ENCODE measurements at regions of chr1 and their contacts with region 1.

Region 1: GRCh38 chr1:86499987-86500593 is 31.4 kb downstream of the CLCA1 start:
- DNase-seq: peak in 6 of 9 donors; percentile 55 to 76 (median 73)
- ATAC-seq: peak; percentile 92
- H3K4me3 ChIP-seq: no peak overlapping the region
- H3K4me3 Mint-ChIP-seq: no peak overlapping the region
- H3K27ac ChIP-seq: no peak overlapping the region
- H3K27ac Mint-ChIP-seq: no peak overlapping the region
- H3K4me1 ChIP-seq: peaks cover 0 to 8% of the 10 kb centered on the region in 2 donors
- H3K4me1 Mint-ChIP-seq: peaks cover 0 to 18% (median 10%) of the 10 kb centered on the region in 7 donors
- H3K27me3 ChIP-seq: no peaks in the 10 kb centered on the region
- H3K27me3 Mint-ChIP-seq: peaks cover 6 to 46% (median 14%) of the 10 kb centered on the region in 5 donors

Region 2: DNA sequence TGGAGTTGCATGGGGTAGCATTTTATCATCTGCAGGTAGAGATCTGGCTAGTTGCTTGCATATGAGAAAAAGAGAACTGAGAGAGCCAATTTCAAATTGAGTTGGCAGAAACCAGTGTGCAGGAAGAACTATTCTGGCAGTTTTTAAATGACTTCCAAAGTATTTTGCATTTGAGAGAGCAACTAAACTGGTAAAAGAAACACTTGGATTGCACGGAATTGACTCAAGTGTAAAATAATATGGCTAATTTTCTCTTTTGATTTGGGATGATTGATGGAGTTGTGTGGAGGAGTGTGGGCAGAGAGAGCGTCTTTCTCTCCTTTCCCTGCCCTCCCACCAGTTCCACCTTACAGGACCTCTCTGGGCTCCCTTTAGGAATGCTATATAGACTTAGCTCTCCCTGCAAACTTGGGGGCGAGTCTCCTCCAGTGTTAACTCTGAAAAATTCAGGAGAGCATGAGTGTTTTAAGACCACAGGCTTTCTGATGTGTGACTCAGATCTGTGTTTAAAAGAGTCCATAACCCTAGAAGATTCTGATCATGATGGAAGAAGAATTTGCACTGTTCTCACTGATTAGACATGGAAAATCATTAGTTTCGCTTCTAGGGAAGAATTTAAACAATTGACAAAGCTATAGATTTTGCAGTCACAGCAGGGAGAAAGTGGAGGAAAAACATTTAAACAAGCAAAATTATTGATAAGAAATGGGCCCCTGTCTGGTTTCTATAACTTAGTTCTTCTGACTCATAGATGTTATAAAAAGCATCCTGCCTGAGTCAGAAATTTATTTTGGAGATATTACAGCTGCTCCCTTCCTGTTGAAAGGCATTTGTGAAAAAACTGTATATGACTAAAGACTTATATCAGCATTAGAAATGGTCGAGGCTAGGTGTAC is 1901.0 kb before region 1 on chr1:
- CTCF ChIA-PET with region 1: no interaction called
- POLR2A ChIA-PET with region 1: no interaction called
- intact Hi-C with region 1: no loop called
- DNase-seq: no peak
- ATAC-seq: no peak
- H3K4me3 ChIP-seq: no peak overlapping the region
- H3K4me3 Mint-ChIP-seq: peak overlapping the region in 1 of 10 donors; percentile 2
- H3K27ac ChIP-seq: no peak overlapping the region
- H3K27ac Mint-ChIP-seq: peak overlapping the region in 2 of 9 donors; percentile 10 to 60
- H3K4me1 ChIP-seq: no peaks in the 10 kb centered on the region
- H3K4me1 Mint-ChIP-seq: peaks cover 0 to 11% (median 1%) of the 10 kb centered on the region in 7 donors
- H3K27me3 ChIP-seq: no peaks in the 10 kb centered on the region
- H3K27me3 Mint-ChIP-seq: no peaks in the 10 kb centered on the region

Region 3: GRCh38 chr1:85707990-85708828 is 791.9 kb before region 1 on chr1 and contains the start of gene ZNHIT6:
- CTCF ChIA-PET with region 1: no interaction called
- POLR2A ChIA-PET with region 1: no interaction called
- intact Hi-C with region 1: loop called in 1 of 2 experiments (anchors 5 kb)
- DNase-seq: peak; percentile 62 to 94 (median 89)
- ATAC-seq: peak; percentile 99
- H3K4me3 ChIP-seq: peak within 1 kb of the TSS; percentile 90
- H3K4me3 Mint-ChIP-seq: no peak within 1 kb of the TSS
- H3K27ac ChIP-seq: peak within 1 kb of the TSS; percentile 77
- H3K27ac Mint-ChIP-seq: no peak within 1 kb of the TSS
- H3K4me1 ChIP-seq: peaks cover 14 to 21% of the 10 kb centered on the region in 2 donors
- H3K4me1 Mint-ChIP-seq: peaks cover 11 to 33% (median 18%) of the 10 kb centered on the region in 7 donors
- H3K27me3 ChIP-seq: no peaks in the 10 kb centered on the region
- H3K27me3 Mint-ChIP-seq: no peaks in the 10 kb centered on the region
- total RNA-seq, gene ZNHIT6: 13.8 to 22.2 (median 20.2) TPM

Region 4: DNA sequence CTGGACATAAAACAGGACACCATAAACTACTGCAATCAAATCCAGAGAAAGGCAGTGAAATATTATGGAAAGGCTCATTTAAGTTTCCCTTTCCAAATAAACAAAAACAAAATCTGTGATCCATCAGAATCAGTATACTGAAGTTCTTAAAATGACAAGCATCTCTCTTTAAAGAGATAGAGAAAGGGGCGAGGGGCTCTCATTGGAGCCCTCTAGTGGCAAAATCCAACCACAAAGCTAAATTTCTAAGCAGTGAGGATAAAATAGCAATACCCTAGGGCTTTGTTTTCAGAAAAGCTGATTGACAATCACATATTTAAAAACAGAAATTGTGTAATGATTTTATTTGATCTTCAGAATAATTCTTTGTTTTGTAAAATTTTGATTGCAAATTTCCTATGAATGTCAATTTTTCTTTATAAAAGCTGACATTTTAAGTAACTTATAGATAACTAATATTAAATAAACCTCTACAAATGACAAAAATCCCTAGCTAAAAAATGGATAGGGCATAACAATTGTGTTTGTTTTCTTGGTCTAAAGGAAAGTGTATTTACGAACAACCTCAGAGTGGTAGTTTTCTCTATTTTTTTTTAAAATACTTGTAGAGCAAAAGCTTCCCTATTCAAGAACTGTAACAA is 481.7 kb before region 1 on chr1:
- CTCF ChIA-PET with region 1: no interaction called
- POLR2A ChIA-PET with region 1: no interaction called
- intact Hi-C with region 1: no loop called
- DNase-seq: peak in 3 of 9 donors; percentile 1 to 18 (median 5)
- ATAC-seq: no peak
- H3K4me3 ChIP-seq: no peak overlapping the region
- H3K4me3 Mint-ChIP-seq: no peak overlapping the region
- H3K27ac ChIP-seq: no peak overlapping the region
- H3K27ac Mint-ChIP-seq: no peak overlapping the region
- H3K4me1 ChIP-seq: no peaks in the 10 kb centered on the region
- H3K4me1 Mint-ChIP-seq: no peaks in the 10 kb centered on the region
- H3K27me3 ChIP-seq: no peaks in the 10 kb centered on the region
- H3K27me3 Mint-ChIP-seq: peaks cover 0 to 2% (median 0%) of the 10 kb centered on the region in 5 donors

Region 5: DNA sequence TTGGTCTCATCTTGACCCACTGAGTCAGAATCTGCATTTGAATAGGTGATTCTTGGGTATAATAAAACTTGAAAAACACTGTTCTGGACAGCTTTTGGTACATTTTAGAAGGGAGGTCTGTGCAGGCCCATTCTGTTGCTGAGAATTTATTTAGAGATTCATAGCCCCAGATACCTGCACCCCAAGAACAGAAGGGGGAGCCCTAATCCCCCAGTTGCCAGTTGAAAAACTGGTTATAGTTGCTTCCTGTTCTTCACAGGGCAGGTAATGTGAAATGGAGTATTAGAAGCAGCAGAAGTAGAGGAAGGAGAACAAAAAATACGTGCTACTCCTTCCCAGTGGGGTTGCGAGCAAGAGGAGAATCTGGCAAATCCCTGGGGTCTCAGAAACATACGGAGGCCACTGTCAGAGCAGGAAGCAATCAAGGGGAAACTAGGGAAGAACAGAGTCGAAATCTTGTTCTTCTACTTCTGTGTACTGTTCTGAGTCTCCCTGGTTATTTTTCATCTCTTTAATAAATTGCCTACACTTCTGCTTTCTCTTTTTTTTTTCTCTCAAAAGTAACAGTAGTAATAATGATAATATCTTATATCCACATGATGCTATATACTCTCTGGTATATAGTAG is 80.7 kb before region 1 on chr1:
- CTCF ChIA-PET with region 1: interaction called, 8 read pairs
- POLR2A ChIA-PET with region 1: no interaction called
- intact Hi-C with region 1: loop called (anchors 1 kb)
- DNase-seq: peak in 7 of 9 donors; percentile 35 to 74 (median 65)
- ATAC-seq: peak; percentile 89
- H3K4me3 ChIP-seq: no peak overlapping the region
- H3K4me3 Mint-ChIP-seq: peak overlapping the region in 9 of 10 donors; percentile 53 to 85 (median 72)
- H3K27ac ChIP-seq: no peak overlapping the region
- H3K27ac Mint-ChIP-seq: peak overlapping the region in 8 of 9 donors; percentile 13 to 85 (median 32)
- H3K4me1 ChIP-seq: no peaks in the 10 kb centered on the region
- H3K4me1 Mint-ChIP-seq: peaks cover 4 to 8% (median 6%) of the 10 kb centered on the region in 7 donors
- H3K27me3 ChIP-seq: no peaks in the 10 kb centered on the region
- H3K27me3 Mint-ChIP-seq: peaks cover 0 to 6% (median 0%) of the 10 kb centered on the region in 5 donors

Region 6: DNA sequence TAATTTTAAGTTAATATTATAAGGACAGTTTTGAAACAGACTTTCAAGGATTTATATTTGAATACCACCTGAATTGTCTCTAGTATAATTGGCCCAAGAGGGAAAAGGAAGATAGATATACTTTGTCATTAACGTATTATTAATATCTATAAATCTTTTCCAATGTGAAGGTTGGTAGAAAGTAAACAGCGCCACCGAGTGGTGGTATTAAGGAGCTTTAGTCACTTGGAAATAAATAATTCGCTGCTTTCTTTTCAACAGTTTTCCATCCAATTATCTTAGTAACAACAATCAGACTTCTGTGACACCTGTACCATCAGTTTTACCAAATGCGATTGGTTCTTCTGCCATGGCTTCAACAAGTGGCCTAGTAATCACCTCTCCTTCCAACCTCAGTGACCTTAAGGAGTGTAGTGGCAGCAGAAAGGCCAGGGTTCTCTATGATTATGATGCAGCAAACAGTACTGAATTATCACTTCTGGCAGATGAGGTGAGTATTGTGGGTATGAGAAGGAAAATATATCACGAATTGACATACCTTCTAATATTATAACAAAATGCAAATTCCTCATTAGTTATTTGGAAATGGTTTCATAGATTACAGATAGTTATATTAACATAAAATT is 242.0 kb after region 1 on chr1:
- CTCF ChIA-PET with region 1: interaction called, 3 read pairs
- POLR2A ChIA-PET with region 1: no interaction called
- intact Hi-C with region 1: loop called (anchors 1 to 2 kb)
- DNase-seq: peak in 7 of 9 donors; percentile 12 to 43 (median 26)
- ATAC-seq: no peak
- H3K4me3 ChIP-seq: no peak overlapping the region
- H3K4me3 Mint-ChIP-seq: peak overlapping the region in 1 of 10 donors; percentile 60
- H3K27ac ChIP-seq: no peak overlapping the region
- H3K27ac Mint-ChIP-seq: no peak overlapping the region
- H3K4me1 ChIP-seq: peaks cover 5 to 12% of the 10 kb centered on the region in 2 donors
- H3K4me1 Mint-ChIP-seq: peaks cover 0 to 6% (median 0%) of the 10 kb centered on the region in 7 donors
- H3K27me3 ChIP-seq: no peaks in the 10 kb centered on the region
- H3K27me3 Mint-ChIP-seq: no peaks in the 10 kb centered on the region

Region 7: DNA sequence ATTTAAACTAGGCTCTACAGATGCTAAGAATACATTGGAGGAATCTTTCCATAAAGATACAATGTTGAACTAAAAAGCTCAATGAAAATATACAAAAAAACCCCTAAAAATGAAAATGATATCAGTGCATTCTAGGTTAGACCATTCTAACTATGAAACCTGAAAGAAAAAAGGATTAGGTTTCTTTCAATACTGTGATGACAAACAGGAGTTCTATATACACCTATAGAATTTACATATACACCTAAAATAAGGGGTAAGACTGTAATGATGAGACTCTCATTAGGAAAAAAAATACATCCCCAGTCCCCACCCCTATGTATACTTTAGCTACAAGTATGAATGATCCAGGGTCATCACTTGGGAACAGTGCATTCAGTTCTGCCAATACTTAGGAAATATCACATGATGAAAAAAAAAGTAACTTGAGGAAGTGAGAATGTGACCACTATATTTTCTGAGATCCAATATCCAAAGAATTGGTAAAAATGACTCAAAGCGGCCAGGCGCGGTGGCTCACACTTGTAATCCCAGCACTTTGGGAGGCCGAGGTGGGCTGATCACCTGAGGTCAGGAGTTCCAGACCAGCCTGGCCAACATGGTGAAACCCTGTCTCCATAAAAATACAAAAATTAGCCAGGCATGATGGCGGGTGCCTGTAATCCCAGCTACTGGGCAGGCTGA is 387.5 kb after region 1 on chr1:
- CTCF ChIA-PET with region 1: no interaction called
- POLR2A ChIA-PET with region 1: no interaction called
- intact Hi-C with region 1: no loop called
- DNase-seq: no peak
- ATAC-seq: no peak
- H3K4me3 ChIP-seq: no peak overlapping the region
- H3K4me3 Mint-ChIP-seq: no peak overlapping the region
- H3K27ac ChIP-seq: no peak overlapping the region
- H3K27ac Mint-ChIP-seq: peak overlapping the region in 2 of 9 donors; percentile 24 to 57
- H3K4me1 ChIP-seq: no peaks in the 10 kb centered on the region
- H3K4me1 Mint-ChIP-seq: peaks cover 7 to 57% (median 41%) of the 10 kb centered on the region in 7 donors
- H3K27me3 ChIP-seq: no peaks in the 10 kb centered on the region
- H3K27me3 Mint-ChIP-seq: no peaks in the 10 kb centered on the region

Region 8: GRCh38 chr1:87064986-87065385 is 564.9 kb after region 1 on chr1:
- CTCF ChIA-PET with region 1: no interaction called
- POLR2A ChIA-PET with region 1: no interaction called
- intact Hi-C with region 1: no loop called
- DNase-seq: no peak
- ATAC-seq: no peak
- H3K4me3 ChIP-seq: no peak overlapping the region
- H3K4me3 Mint-ChIP-seq: no peak overlapping the region
- H3K27ac ChIP-seq: no peak overlapping the region
- H3K27ac Mint-ChIP-seq: peak overlapping the region in 1 of 9 donors; percentile 49
- H3K4me1 ChIP-seq: peaks cover 0 to 4% of the 10 kb centered on the region in 2 donors
- H3K4me1 Mint-ChIP-seq: peaks cover 7 to 43% (median 31%) of the 10 kb centered on the region in 7 donors
- H3K27me3 ChIP-seq: no peaks in the 10 kb centered on the region
- H3K27me3 Mint-ChIP-seq: no peaks in the 10 kb centered on the region

Region 9: DNA sequence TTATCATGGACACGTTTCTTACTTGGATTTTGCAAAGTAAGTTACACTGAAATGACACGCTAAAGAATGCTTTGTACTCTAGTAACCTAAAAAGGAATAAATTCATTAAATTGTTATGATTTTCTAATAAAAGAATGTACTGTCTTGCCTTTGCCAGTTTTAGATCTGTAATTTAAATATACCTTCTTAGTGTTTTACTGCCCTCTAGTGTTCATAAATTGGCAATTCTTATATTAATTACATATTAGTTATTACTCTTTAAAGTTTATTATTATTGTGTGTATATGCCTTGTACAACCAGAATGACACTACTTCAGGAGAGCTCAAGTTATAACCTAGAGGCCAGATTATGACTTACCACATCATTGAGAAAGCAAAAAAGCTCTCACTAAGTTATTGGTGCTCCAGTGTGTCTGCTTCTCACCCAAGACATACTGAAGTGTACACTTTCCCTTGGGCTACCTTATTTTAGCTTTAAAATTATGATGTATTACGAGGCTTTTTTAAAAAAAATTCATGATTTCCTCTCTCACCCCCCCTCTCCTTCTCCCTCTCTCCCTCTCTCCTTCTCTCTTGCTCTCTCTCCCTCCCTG is 584.2 kb after region 1 on chr1:
- CTCF ChIA-PET with region 1: interaction called, 4 read pairs
- POLR2A ChIA-PET with region 1: no interaction called
- intact Hi-C with region 1: loop called (anchors 1 to 5 kb)
- DNase-seq: peak in 6 of 9 donors; percentile 11 to 59 (median 44)
- ATAC-seq: peak; percentile 65
- H3K4me3 ChIP-seq: no peak overlapping the region
- H3K4me3 Mint-ChIP-seq: no peak overlapping the region
- H3K27ac ChIP-seq: no peak overlapping the region
- H3K27ac Mint-ChIP-seq: no peak overlapping the region
- H3K4me1 ChIP-seq: no peaks in the 10 kb centered on the region
- H3K4me1 Mint-ChIP-seq: peaks cover 0 to 6% (median 4%) of the 10 kb centered on the region in 7 donors
- H3K27me3 ChIP-seq: no peaks in the 10 kb centered on the region
- H3K27me3 Mint-ChIP-seq: no peaks in the 10 kb centered on the region